HEK293 (cell line): ENCODE measurements at regions of chr11 and their contacts with region 1.

Region 1: DNA sequence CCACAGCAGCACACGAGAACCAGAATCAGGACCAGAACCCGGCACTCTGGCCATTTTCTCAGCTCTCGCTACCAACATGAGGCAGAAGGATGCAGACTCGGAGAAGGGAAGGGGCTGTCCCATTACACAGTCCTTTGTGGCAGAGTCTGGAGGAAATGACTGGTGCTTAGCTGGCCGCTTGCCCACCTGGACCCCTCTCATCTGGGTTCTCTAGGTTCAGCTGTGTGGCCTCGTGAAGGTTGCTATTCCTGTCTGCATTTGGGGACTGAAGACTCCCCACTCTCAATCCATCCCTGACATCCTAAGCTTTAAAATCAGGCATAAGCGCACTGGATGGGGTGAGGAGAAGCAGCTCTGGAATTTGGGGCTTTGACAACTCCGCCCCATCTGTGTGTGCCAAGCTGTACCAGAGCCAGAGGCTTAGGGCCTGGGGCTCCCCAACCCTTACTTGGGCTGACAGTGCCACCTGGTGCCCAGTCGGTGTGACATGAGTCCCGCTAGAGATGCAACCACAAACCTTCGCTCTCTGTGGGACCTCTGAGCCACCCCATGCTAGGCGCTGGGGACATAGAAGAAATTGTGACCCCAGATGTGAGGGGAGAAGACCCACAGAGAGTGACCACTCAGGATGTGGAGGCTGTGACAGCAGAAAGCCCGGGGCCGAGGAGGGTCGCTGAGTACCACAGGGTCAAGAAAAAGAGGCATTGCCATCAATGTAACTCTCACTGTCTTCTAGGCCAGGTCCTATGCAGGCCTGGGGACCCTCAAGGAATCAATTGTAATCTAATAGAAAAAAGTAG is 35.9 kb upstream of the FCHSD2 start:
- H3K4me3 ChIP-seq: no peak overlapping the region
- H3K27ac ChIP-seq: no peak overlapping the region
- H3K4me1 ChIP-seq: no peaks in the 10 kb centered on the region
- CTCF ChIP-seq: peak; percentile 64

Region 2: DNA sequence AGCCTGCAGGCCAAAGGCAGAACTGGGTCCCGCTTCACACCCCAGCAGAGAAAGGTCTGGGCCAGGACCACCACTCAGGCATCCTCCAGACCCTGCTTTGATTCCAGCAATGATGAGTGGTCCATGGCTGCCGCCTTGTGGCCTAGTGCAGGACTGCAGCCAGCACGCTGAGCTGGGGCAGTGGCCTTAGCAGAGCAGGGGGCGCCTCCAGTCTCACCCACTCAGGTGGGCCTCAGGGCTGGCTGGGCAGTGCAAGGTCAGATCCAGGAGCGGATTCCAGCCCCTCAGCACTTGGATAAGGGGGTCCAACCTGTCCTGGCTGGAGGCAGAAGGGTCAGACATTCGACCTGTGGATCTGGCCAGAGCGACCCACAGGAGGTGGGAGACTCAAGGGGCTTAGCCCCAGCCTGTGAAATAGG is 494.2 kb before region 1 on chr11:
- CTCF ChIA-PET with region 1: interaction called, 12 read pairs
- POLR2A ChIA-PET with region 1: no interaction called
- H3K4me3 ChIP-seq: no peak overlapping the region
- H3K27ac ChIP-seq: no peak overlapping the region
- H3K4me1 ChIP-seq: no peaks in the 10 kb centered on the region
- CTCF ChIP-seq: peak; percentile 79

Region 3: DNA sequence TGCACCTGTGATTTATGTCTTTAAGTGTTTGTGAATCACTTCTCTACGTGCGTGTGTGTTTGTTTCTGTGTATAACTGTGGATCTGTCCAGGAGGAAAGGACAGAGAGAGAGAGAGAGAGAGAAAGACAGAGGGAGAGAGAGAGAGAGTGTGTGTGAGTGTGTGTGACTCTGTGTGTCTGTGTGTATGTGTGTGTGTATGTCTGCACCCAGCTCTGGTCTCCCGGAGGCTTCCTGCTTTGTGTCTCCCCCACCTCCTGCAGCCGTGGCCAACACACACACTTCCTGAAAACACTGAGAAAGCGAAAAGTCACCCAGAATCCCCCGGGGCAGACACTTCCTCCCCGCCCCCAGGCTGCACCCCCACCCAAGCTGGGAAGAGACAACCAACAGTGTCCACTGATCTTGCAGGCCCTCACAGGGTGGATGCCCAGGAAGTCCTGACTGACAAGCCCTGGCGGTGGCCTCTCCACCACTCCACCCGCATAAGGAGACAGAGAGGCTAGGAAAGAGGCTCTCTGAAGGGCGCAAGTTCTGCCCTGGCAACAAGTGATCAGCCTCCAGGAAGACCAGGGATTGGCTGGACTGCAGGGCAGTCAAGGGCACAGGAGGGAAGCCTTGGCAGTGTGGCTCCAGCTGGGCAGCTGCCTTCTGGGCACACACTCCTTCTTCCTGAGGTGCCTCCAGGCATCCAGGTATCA is 455.8 kb before region 1 on chr11:
- CTCF ChIA-PET with region 1: interaction called, 25 read pairs
- POLR2A ChIA-PET with region 1: no interaction called
- H3K4me3 ChIP-seq: peak overlapping the region; percentile 62
- H3K27ac ChIP-seq: peak overlapping the region; percentile 78
- H3K4me1 ChIP-seq: peaks cover 5% of the 10 kb centered on the region; the same call in 1 of the 2 replicates
- CTCF ChIP-seq: no peak

Region 4: DNA sequence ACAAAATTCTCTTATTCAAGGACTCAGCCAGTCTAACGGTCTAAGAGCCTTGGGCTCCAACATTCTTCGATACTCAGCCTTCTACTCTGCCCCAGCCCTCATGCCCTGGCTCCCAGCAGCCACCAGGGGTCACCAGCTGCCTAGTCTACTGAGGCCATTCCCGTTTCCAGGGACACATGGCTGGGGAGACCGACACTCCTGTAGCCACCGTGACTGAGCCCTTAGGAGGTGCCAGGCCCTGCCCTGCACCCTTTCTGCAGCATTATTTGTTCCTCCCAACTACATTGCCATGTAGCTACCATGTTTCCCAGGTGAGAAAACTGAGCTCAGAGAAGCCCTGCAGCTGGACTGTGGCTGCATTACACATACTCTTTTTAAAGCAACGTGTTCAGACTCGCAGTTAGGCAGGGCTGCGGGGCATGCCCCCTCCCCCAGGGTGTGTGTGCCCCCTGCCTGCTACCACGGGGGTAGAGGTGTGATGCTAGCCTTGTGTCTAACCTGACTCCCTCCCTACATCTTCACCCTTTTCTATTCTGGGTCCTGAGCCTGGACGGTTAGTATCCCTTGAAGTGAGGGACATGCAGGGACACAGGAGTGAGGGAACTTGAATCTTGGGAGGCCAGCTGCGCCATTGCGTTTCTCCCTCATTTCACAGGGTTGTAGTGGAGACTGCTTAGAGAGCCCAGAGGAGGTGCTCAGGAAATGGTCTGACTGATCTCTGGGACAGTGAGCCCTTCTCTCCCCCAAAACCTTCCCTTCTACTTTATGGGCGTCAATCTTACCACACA is 346.3 kb before region 1 on chr11:
- CTCF ChIA-PET with region 1: interaction called, 50 read pairs
- POLR2A ChIA-PET with region 1: no interaction called
- H3K4me3 ChIP-seq: no peak overlapping the region
- H3K27ac ChIP-seq: no peak overlapping the region
- H3K4me1 ChIP-seq: no peaks in the 10 kb centered on the region
- CTCF ChIP-seq: peak; percentile 93

Region 5: DNA sequence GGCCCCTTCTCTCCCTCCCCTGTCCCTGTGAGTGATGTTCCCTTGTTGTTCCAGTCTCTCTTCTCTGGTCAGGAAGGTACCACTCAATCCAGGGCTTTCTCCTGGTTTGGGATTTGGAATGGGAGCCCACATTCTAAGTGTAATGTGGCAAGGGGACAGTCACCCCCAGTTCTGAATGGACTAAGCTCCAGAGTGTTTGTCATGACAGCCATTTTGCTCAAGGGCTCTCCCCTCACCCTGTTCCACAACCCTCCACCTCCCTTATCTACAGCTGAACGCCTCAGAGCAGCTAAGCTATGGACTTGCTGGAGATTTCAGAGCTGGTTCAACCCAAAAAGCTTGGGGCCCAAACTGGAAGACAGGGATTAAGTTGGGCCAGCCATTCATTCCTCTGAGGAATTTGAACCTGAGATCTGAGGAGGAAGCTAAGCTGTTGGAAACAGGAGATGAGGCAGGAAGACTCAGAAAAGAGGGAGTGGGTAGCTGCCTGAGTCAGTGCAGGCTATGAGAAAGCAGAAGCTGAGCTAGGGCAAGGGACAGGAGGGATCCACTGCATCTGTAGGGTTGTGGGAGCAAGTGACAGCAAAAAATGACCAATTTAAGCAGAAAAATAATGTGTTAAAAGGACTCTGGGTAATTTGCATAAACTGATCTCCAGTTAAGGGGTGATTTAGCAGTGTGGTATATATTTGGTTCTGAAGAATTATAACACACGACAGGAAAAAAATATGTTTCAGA is 13.0 kb before region 1 on chr11:
- CTCF ChIA-PET with region 1: interaction called, 29 read pairs
- POLR2A ChIA-PET with region 1: no interaction called
- H3K4me3 ChIP-seq: no peak overlapping the region
- H3K27ac ChIP-seq: no peak overlapping the region
- H3K4me1 ChIP-seq: no peaks in the 10 kb centered on the region
- CTCF ChIP-seq: no peak

Region 6: GRCh38 chr11:73236854-73237253 is 58.9 kb after region 1 on chr11:
- CTCF ChIA-PET with region 1: interaction called, 62 read pairs
- POLR2A ChIA-PET with region 1: no interaction called
- H3K4me3 ChIP-seq: no peak overlapping the region
- H3K27ac ChIP-seq: no peak overlapping the region
- H3K4me1 ChIP-seq: no peaks in the 10 kb centered on the region
- CTCF ChIP-seq: peak; percentile 22; the same call in 1 of the 2 replicates

Region 7: DNA sequence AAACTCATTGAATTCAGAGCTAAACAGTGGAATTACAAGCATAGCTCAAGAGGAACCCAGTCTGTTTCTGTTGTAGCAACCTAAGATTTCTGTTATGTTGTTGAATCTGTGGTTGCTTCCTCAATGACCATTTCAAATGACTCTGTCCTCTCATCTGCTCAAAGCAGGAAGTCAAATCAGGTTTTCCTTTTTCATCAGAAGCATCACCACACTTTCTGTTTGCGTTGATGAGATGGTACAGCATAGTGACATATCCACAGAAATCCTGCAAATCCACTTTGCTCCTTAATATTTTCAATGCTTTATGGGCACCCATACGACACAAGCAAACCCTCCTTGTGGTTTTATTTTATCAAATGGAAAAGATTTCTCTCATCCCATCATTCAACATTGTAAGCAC is 817.3 kb after region 1 on chr11:
- CTCF ChIA-PET with region 1: no interaction called
- POLR2A ChIA-PET with region 1: no interaction called
- H3K4me3 ChIP-seq: no peak overlapping the region
- H3K27ac ChIP-seq: no peak overlapping the region
- H3K4me1 ChIP-seq: no peaks in the 10 kb centered on the region
- CTCF ChIP-seq: no peak